ENCODE measurements at regions of chr10 and their contacts with region 1.

Region 1: DNA sequence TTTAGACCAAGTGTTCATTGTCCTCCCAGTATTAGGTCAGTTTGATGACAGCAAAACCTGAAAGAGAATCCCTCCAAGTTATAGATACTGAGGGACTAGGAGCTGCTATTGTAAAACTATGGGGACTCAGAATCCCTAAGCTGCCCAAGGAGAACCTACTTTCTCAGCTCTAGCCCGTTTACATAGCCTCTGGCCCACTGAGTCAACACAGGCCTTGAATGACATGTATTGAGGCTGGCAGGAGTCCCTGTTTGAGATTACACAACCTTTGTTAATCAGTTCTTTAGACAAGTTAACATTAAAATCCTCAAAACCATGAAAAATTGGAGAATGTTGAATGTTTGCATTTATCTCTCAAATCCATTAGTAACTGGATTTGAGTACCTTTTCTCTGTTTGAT is 1079.0 kb downstream of the KCNMA1 start:
- DNase-seq: no peak

Region 2: GRCh38 chr10:75565286-75566251 is 993.0 kb before region 1 on chr10:
- intact Hi-C with region 1: no loop called
- DNase-seq: no peak

Region 3: DNA sequence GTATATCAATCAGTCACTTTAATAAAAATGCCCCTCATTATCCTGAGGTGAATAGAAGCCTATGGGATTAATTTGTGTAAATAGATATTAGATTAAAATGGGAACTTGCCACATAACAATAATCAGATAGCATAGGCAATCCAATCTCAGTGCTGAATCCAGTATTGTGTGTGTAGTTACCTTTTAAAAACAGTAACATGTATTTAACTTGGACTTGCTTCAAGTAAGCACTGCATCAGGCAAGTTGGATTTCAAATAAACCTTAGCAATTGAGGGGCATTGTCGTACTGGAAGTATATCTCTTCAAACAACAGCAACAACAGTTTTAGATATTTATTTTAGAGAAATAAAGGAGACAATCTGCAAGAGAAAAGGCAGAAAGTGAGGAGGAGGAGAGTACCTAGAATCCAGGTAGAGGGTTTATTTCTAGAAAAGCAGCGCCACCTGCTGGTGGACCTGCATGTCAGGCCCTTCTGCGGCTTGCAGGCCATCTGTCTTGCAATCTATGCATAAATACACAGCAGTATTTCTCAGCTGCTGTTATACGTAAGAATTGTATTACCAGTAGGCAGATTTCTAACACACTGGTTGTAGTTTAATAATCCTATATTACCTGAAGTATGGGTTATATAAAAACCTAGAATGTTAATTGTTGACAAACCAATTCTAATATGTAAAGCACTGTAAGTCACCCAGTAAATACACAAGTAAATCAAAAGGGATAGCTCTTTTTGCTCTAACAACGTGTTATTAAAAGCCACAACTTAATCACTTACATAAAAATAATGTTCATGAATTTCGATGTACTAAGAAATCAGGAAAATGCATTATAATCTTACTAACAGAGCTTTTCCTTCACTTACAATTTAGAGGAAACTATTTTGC is 426.2 kb after region 1 on chr10:
- intact Hi-C with region 1: loop called (anchors 10 kb)
- DNase-seq: peak; percentile 90